ENCODE measurements at regions of chr21 and their contacts with region 1.

Region 1: GRCh38 chr21:38355992-38356797 is 99.4 kb downstream of the KCNJ15 start:
- DNase-seq: peak; percentile 60 to 89 (median 82)
- H3K4me3 ChIP-seq: no peak overlapping the region
- H3K27ac ChIP-seq: no peak overlapping the region
- H3K4me1 ChIP-seq: no peaks in the 10 kb centered on the region
- H3K27me3 ChIP-seq: no peaks in the 10 kb centered on the region
- CTCF ChIP-seq: peak; percentile 57 to 88 (median 68)
- EP300 ChIP-seq: no peak
- POLR2A ChIP-seq: no peak

Region 2: DNA sequence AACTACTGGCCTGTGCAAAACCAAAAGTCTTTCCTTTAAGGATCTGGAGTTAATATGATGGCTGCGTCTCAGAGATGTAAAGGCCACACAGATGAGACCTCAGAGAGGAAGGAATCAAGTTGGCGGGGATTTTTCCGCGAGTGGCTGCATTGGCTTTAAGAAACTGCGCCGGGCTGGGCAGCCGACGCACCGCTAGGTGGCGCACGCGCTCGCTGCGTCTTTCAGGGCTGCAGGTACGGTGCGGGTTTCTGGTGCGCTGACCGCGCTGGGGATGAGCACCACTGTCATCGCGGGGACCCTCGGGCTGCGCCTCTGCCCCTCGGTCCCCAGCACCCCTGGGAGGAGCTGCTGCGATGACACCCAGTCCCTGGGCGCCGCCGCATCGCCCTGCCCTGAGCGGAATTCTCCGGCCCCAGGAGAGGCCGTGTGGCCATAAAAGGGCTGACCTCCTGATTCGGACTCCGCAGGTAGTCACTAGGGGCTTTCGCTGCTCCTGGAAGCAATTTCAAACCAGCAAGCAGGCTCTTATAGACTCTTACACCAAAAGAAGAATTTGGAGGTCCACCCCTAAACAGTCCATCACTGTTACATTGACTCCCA is 680.9 kb before region 1 on chr21:
- intact Hi-C with region 1: loop called in 2 of 4 experiments (anchors 10 kb)
- DNase-seq: peak; percentile 29 to 78 (median 67)
- H3K4me3 ChIP-seq: no peak overlapping the region
- H3K27ac ChIP-seq: no peak overlapping the region
- H3K4me1 ChIP-seq: no peaks in the 10 kb centered on the region
- H3K27me3 ChIP-seq: no peaks in the 10 kb centered on the region
- CTCF ChIP-seq: peak; percentile 50 to 89 (median 54)
- EP300 ChIP-seq: no peak
- POLR2A ChIP-seq: no peak

Region 3: GRCh38 chr21:38159355-38159754 is 196.8 kb before region 1 on chr21:
- intact Hi-C with region 1: loop called (anchors 5 to 10 kb)
- DNase-seq: peak; percentile 33 to 64 (median 50)
- H3K4me3 ChIP-seq: no peak overlapping the region
- H3K27ac ChIP-seq: no peak overlapping the region
- H3K4me1 ChIP-seq: no peaks in the 10 kb centered on the region
- H3K27me3 ChIP-seq: no peaks in the 10 kb centered on the region
- CTCF ChIP-seq: peak; percentile 22 to 63 (median 40)
- EP300 ChIP-seq: no peak
- POLR2A ChIP-seq: no peak

Region 4: DNA sequence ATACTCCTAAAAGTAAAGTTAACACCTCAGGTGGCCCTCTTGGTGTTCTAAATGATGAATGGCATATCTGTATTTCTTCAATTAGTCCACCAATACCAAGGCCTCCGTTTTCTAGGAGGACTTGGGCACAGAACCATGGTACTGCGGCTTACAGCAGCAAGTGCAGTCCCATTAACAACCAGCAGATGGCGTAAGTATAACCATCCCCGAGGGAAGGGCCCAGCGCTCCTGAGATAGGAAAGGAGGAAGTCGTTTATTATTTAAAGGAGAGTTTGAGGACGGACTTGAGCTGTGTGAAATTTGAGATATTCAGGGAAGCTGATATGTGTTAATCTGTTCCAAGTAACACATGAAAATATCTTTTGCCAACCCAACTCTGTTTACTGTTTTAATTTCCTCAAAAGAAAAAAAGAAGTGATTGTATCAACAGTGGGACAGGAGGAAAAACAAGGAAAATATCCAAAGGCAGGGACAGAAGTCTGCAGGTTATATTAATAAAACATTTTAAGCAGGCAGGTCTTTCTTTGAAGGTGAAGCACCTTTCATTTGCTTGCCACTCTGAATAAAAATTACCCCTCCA is 137.1 kb before region 1 on chr21:
- intact Hi-C with region 1: loop called in 3 of 4 experiments (anchors 5 to 10 kb)
- DNase-seq: peak; percentile 29 to 69 (median 47)
- H3K4me3 ChIP-seq: no peak overlapping the region
- H3K27ac ChIP-seq: no peak overlapping the region
- H3K4me1 ChIP-seq: no peaks in the 10 kb centered on the region
- H3K27me3 ChIP-seq: no peaks in the 10 kb centered on the region
- CTCF ChIP-seq: peak; percentile 41 to 74 (median 71)
- EP300 ChIP-seq: no peak
- POLR2A ChIP-seq: no peak

Region 5: DNA sequence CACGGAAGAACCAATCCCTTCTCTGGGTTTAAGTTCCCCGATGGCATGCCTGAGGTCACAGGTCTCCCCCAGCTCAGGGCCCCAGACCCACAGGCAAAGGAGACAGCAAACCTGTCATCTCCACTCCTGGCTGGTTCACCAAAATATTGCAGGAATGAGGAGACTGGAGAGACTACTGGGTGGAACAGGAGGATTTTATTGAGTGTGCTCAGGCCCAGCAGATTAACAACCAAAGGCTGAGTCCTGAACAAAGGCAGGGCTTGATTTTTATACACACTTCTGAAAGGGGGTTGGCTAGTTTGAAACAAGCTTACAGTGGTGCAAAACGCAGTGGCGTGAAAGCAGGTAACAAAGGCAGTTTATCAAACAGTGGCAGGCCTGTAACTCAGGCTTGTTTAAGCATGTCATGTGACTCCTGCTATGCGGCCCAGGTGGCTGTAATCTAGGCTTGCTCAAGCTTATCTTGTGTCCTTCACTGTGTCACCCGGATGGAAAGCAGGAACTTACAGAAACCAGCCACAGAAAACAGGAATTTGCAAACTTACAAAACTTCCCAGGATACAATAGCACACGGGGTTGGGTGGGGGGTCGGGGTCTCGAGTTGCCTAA is 126.8 kb before region 1 on chr21:
- intact Hi-C with region 1: loop called in 2 of 4 experiments (anchors 5 to 10 kb)
- DNase-seq: no peak
- H3K4me3 ChIP-seq: no peak overlapping the region
- H3K27ac ChIP-seq: no peak overlapping the region
- H3K4me1 ChIP-seq: no peaks in the 10 kb centered on the region
- H3K27me3 ChIP-seq: no peaks in the 10 kb centered on the region
- CTCF ChIP-seq: no peak
- EP300 ChIP-seq: no peak
- POLR2A ChIP-seq: no peak

Region 6: GRCh38 chr21:38380481-38381137 is 24.4 kb after region 1 on chr21:
- intact Hi-C with region 1: no loop called
- DNase-seq: no peak
- H3K4me3 ChIP-seq: no peak overlapping the region
- H3K27ac ChIP-seq: no peak overlapping the region
- H3K4me1 ChIP-seq: no peaks in the 10 kb centered on the region
- H3K27me3 ChIP-seq: no peaks in the 10 kb centered on the region
- CTCF ChIP-seq: no peak
- EP300 ChIP-seq: no peak
- POLR2A ChIP-seq: no peak

Region 7: GRCh38 chr21:39434950-39435349 is 1078.8 kb after region 1 on chr21:
- intact Hi-C with region 1: no loop called
- DNase-seq: no peak
- H3K4me3 ChIP-seq: no peak overlapping the region
- H3K27ac ChIP-seq: no peak overlapping the region
- H3K4me1 ChIP-seq: no peaks in the 10 kb centered on the region
- H3K27me3 ChIP-seq: no peaks in the 10 kb centered on the region
- CTCF ChIP-seq: no peak
- EP300 ChIP-seq: no peak
- POLR2A ChIP-seq: no peak